Ascending aorta (tissue), 2 donors: ENCODE measurements at regions of chr5 and their contacts with region 1.

Region 1: DNA sequence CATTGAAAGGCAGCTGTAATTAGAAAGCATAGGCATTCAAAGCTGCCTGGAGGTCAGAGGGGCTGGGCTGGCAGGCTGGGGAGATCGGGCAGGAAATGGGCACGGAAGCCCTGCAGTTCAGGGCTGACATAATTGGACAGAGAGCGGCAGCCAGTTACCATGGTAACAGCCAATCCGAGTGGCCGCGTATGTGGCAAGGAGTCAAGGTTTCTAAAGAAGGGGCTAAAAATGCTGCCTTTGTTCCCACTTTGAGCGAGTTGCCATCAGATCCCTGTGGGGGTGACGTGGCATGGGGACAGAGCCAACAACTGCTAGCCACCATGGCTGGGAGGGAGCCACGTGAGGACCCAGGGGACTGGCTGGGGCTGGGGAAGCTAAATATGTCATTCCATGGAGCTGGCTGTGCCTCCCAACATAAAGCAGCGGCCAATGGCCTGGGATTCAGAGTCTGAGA is 44.7 kb upstream of the NDFIP1 start:
- DNase-seq: peak; percentile 91 to 98
- H3K4me3 ChIP-seq: no peak overlapping the region
- H3K27ac ChIP-seq: peak overlapping the region; percentile 74 to 88
- H3K4me1 ChIP-seq: peaks cover 8 to 28% of the 10 kb centered on the region in 2 donors
- H3K27me3 ChIP-seq: no peaks in the 10 kb centered on the region
- CTCF ChIP-seq: no peak

Region 2: GRCh38 chr5:141960449-141961202 is 103.3 kb before region 1 on chr5:
- intact Hi-C with region 1: no loop called
- DNase-seq: peak; percentile 51 to 94
- H3K4me3 ChIP-seq: peak overlapping the region in 1 of 2 donors; percentile 30
- H3K27ac ChIP-seq: peak overlapping the region in 1 of 2 donors; percentile 22
- H3K4me1 ChIP-seq: no peaks in the 10 kb centered on the region
- H3K27me3 ChIP-seq: no peaks in the 10 kb centered on the region
- CTCF ChIP-seq: peak; percentile 67 to 84 (median 84)

Region 3: GRCh38 chr5:142024771-142025304 is 39.1 kb before region 1 on chr5:
- intact Hi-C with region 1: loop called (anchors 2 kb)
- DNase-seq: peak; percentile 48 to 92
- H3K4me3 ChIP-seq: peak overlapping the region; percentile 62 to 65
- H3K27ac ChIP-seq: peak overlapping the region; percentile 81 to 85
- H3K4me1 ChIP-seq: peaks cover 0 to 2% of the 10 kb centered on the region in 2 donors
- H3K27me3 ChIP-seq: no peaks in the 10 kb centered on the region
- CTCF ChIP-seq: no peak

Region 4: DNA sequence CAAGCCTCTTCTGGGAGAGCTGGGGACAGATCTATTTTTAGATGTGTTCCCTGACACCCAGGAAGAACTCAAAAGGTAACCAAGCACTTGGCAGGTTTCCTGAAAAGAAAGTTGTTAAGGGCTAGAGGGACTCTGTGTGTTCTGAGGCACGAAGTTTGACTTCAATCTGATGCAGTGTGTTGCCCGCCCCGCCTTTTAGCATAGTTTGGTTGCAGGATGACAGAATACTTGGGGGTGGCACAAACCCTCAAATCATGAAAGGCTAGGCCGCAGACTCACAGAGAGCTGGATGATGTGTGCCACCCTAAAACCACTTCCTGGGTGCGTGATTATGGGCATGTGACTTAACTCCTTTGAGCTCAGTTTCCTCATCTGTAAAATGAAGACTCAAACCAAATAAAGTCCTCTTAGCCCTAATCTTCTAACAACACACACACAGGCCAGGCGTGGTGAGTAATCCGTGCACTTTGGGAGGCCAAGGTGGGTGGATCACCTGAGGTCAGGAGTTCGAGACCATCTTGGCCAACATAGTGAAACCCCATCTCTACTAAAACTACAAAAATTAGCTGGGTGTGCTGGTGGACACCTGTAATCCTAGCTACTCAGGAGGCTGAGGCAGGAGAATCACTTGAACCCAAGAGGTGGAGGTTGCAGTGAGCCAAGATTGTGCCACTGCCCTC is 31.9 kb after region 1 on chr5:
- intact Hi-C with region 1: loop called (anchors 2 kb)
- DNase-seq: no peak
- H3K4me3 ChIP-seq: no peak overlapping the region
- H3K27ac ChIP-seq: peak overlapping the region; percentile 35
- H3K4me1 ChIP-seq: peaks cover 0 to 9% of the 10 kb centered on the region in 2 donors
- H3K27me3 ChIP-seq: no peaks in the 10 kb centered on the region
- CTCF ChIP-seq: no peak

Region 5: DNA sequence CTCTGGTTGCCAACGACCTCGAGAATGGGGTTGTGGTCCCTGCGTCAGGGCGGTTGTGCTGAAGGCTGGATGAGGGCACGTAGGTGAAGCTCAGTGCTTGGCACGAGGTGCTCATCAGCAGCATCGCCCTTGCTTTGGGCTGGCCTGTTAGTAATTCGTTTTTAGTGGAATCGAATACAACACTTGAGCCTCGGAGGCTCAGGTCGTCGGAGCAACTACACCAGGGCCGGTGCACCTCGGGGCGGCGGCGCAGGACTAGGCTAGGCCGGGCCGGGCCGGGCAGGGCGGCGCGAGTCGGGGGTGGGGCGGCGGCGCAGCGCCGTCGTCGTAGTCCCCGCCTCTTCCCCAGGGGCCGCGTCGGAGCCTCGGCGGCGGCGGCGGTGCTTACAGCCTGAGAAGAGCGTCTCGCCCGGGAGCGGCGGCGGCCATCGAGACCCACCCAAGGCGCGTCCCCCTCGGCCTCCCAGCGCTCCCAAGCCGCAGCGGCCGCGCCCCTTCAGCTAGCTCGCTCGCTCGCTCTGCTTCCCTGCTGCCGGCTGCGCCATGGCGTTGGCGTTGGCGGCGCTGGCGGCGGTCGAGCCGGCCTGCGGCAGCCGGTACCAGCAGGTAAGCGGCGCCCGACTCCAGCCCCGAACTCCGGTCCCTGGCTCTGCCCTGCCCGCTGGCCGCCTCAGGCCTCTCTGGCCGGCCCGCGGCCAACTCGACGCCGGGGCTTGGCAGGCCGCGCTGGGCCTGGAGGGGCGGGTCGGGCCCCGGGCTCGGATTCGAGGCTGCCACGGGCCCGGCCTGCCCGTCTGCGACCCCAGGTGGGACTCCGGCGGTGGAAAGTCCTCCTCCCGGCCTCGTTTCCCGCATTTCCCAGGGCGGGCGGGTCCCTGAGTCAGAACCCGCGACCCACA is 44.8 kb after region 1 on chr5 and contains the start of gene NDFIP1:
- intact Hi-C with region 1: loop called (anchors 2 kb)
- DNase-seq: peak; percentile 47 to 90
- H3K4me3 ChIP-seq: peak within 1 kb of the TSS; percentile 85 to 93
- H3K27ac ChIP-seq: peak within 1 kb of the TSS; percentile 98 to 100
- H3K4me1 ChIP-seq: peaks cover 11 to 36% of the 10 kb centered on the region in 2 donors
- H3K27me3 ChIP-seq: no peaks in the 10 kb centered on the region
- CTCF ChIP-seq: peak in 2 of 3 experiments; percentile 15 to 25
- total RNA-seq, gene NDFIP1: 310 TPM

Region 6: GRCh38 chr5:142472300-142472951 is 408.5 kb after region 1 on chr5:
- intact Hi-C with region 1: no loop called
- DNase-seq: no peak
- H3K4me3 ChIP-seq: no peak overlapping the region
- H3K27ac ChIP-seq: no peak overlapping the region
- H3K4me1 ChIP-seq: no peaks in the 10 kb centered on the region
- H3K27me3 ChIP-seq: no peaks in the 10 kb centered on the region
- CTCF ChIP-seq: no peak